ENCODE measurements at regions of chr3 and their contacts with region 1.

Region 1: DNA sequence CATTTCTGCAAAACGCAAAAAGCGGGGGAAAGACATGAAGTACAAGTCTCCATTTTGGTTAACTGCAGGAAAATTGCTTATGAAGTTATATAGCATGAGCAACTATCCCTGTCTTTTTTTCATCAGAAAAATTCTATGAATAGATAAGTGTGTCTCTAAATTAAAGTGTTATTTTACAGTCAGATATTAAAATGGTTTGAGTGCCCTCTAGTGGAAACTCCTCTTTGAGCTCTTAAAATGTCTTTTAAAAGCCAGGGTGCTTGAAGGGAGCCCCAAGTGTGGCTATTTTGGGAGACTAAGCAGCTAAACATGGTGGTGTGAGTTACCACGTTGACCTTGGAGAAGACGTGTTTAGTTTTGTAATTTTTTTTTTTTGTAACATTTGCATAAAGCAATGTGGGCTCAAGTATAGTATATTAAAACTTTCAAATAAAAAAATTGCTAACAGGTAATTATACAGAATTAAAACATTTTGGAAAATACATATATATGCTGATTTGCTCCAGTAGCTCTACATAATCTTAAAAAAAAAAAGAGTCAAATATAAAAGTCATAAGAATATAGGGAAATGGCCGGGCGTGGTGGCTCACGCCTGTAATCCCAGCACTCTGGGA is 77.2 kb downstream of the PPP2R3A start:
- H3K4me3 Mint-ChIP-seq: no peak overlapping the region
- H3K27ac Mint-ChIP-seq: no peak overlapping the region
- H3K4me1 Mint-ChIP-seq: no peaks in the 10 kb centered on the region
- H3K27me3 Mint-ChIP-seq: no peaks in the 10 kb centered on the region

Region 2: DNA sequence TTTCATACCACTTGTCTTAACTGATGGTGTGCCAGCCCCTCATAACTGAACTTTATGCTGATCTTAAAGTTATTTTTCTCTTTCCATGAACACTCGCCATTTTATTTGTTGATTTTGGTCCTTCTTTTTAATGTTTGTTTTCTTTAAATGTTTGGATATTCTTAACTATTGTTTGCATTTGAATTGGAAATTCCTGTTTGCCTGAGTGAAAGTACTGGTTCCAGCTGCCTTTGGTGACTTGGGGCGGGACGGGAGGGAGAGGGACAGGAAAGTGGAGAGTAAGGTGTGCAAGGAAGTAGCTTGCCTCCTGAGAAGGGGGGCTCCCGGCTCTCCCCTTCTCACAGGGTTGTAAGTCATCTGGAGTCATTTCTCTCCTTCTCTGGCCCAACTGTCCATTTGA is 364.3 kb before region 1 on chr3:
- intact Hi-C with region 1: no loop called
- H3K4me3 Mint-ChIP-seq: no peak overlapping the region
- H3K27ac Mint-ChIP-seq: no peak overlapping the region
- H3K4me1 Mint-ChIP-seq: no peaks in the 10 kb centered on the region
- H3K27me3 Mint-ChIP-seq: no peaks in the 10 kb centered on the region

Region 3: GRCh38 chr3:135895106-135895733 is 147.5 kb before region 1 on chr3:
- intact Hi-C with region 1: loop called (anchors 10 kb)
- H3K4me3 Mint-ChIP-seq: no peak overlapping the region
- H3K27ac Mint-ChIP-seq: no peak overlapping the region
- H3K4me1 Mint-ChIP-seq: no peaks in the 10 kb centered on the region
- H3K27me3 Mint-ChIP-seq: no peaks in the 10 kb centered on the region

Measured in dendritic cell treated with granulocyte-macrophage colony-stimulating factor and Interleukin-4, amounts not matched to agents 40 ng/mL and 50 ng/mL, for 4 days (primary cell).